HEK293T (cell line): ENCODE measurements at regions of chr13 and their contacts with region 1.

Region 1: DNA sequence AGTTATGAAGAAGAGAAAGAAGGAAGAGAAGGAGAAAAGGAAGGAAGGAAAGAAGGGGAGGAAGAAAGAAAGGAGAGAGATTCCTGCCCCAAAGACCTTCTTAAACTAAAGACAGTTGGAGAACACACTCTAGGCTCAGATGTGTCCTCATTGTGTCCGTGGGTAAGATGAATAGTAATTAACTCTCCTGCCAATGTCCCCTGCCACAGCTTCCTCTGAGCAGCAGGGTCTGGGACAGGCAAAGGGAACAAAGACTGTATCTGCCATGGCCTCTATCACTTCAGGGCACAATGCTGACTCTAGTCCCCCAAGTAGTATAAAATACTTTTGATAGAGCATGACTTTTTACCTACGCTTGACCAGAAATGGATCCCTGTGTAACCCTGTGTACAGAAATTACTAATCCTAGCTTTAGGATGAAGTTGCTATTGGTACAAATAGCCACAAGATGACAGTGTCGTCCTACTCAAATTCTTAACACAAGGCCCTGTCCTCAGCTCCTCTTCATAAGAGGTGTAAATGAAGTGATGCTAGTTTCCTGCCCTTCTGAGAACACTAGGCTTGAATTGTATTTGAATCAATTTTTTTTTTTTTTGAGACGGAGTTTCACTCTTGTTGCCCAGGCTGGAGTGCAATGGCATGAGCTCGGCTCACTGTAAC is 186.2 kb upstream of the GPR12 start:
- DNase-seq: peak; percentile 66

Region 2: DNA sequence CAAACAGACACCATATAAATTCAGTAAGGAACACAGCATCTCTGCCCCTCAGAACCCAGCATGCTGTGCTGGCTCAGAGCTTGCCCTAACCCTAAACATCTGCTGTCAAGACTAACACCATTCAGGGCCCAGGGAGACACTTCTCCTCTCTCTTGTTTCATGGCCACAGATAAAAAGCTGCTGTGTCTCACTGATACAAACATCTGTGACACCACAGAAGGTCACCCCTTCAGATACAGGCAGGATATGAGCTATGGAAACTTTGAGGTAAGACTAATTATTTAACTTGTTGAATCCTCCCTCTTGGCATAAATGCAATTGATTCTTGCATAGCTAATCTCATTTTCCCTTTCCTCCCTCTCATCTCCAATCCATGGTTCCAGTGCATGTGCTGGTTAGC is 124.7 kb before region 1 on chr13:
- CTCF ChIA-PET with region 1: no interaction called
- POLR2A ChIA-PET with region 1: no interaction called
- DNase-seq: no peak

Region 3: GRCh38 chr13:26964278-26965250 is 17.8 kb after region 1 on chr13:
- CTCF ChIA-PET with region 1: interaction called, 11 read pairs
- POLR2A ChIA-PET with region 1: interaction called, 3 read pairs
- DNase-seq: no peak

Region 4: DNA sequence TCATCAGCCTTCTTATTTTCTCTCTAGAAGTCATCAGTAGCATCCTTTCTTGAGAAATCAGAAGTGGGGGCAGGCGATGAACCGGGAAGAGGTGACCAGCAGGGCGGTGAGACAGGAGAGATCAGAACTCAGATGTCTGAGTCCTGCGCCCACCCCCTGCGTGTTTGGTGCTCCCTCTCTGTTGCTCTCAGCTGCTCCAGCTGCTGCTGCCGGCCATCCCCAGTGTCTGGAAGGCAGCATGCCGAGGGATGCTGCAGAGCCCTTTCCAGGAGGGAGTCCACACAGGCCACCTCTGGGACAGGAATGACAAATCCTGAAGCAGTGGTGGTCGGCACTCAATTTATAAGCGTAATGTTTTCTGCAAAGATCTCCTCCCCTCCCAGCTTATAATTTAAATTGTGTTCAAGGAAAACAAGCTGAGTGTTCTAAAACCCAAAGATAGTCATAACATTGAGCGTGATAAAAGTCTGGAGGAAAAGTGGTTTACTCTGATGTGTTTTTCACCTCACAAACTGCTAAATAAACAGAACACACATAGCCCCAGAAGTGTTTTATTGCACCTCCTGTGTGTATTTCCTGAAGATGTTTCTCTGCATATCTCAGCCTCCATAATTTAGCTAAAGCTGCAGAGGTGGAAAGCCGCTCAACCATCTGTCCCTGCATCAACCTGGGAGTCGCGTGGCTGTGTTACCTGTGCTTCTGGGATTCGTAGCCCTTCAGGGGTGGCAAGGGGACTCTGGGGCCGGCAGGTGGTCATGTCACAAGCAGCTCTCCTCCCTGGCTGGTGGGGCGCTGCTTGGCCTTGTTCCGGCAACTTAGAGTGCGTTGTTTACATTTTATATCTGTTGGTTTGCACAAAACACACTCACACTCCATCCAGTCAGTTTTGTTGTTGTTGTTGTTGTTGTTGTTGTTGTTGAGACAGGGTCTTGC is 33.6 kb after region 1 on chr13:
- CTCF ChIA-PET with region 1: interaction called, 50 read pairs
- POLR2A ChIA-PET with region 1: interaction called, 9 read pairs
- DNase-seq: no peak

Region 5: GRCh38 chr13:26985285-26985878 is 38.6 kb after region 1 on chr13:
- CTCF ChIA-PET with region 1: interaction called, 50 read pairs
- POLR2A ChIA-PET with region 1: interaction called, 9 read pairs
- DNase-seq: peak; percentile 68

Region 6: DNA sequence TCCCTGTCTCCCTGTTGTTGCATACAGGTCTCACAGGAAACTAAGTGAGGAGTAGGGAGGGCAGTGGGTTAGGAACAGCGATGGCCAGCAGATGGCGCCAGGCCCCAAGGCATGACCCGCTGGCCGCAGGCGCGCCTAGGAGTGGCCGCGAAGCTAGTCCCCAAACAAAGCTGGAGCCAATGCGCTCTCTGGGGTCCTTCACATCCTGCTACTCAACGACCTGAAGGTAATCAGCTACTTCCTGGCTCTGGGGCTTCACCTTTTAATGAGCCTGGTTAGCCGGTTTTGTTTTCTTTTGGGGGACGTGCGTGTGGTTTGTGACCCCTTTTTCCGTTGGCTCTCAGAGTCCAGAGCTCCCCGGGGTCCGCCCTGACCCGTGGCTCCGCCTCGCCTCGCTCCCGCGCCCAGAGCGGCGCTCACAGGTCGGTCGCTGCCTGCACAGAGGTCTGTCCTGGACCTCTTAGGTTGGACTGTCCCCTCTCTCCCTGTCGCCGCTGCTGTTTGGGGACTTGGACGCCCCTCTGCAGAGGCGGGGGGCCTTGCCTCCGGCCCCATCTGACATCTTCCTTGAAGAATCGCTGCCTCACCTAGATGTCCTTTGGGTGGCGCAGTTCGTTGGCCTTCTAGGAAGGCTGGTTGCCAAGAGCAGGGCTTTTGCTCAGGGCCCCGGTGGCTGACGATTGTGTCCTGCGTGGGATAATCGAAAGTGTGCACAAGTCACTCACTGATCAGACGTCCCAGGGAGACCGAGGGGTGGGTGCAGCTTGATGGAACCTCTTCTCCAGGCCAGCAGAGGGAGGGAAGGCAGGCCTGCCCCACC is 415.5 kb after region 1 on chr13:
- CTCF ChIA-PET with region 1: interaction called, 88 read pairs
- POLR2A ChIA-PET with region 1: interaction called, 4 read pairs
- DNase-seq: peak; percentile 86